Activated CD4-positive, alpha-beta T cell treated with anti-CD3 and anti-CD28 coated beads, Interleukin-2, amount 10 ng/mL, durations not matched to agents 24 days and 14 days (primary cell): ENCODE measurements at regions of chr16 and their contacts with region 1.

Region 1: DNA sequence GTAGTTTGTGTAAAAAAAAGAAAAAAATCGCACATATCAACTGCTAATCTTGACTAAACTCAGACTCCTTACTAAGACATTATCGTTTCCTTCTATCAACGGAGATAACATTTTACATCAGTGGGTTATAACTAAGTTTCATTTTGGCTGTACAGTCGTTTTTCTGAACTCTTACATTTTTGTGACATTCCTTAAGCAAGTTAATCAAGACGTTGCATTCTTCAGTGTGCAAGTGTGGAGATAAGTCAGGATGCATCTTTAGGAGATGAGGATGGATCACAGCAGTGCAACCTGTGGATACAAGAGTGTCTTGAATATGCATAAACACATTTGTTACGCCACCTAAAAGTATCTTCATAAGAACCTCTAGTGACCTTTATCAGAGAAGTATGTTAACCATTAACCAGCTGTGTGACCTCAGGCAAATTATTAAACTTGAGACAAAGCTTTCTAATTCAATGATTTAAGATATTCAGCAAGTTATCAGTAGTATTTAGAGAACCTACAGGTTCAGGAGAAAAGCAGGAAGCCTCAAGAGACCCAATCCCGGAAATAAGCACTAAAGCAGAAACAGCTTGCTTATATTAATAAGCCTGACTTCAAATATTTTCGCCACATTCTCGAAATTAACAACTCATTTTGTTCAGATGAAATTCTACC is 9.4 kb downstream of the CMC2 start:
- DNase-seq: peak; percentile 67
- H3K4me3 Mint-ChIP-seq: peak overlapping the region; percentile 88
- H3K27ac Mint-ChIP-seq: peak overlapping the region; percentile 89
- H3K4me1 Mint-ChIP-seq: peaks cover 48% of the 10 kb centered on the region
- H3K27me3 Mint-ChIP-seq: no peaks in the 10 kb centered on the region

Region 2: GRCh38 chr16:80899809-80900592 is 97.3 kb before region 1 on chr16:
- intact Hi-C with region 1: no loop called
- DNase-seq: no peak
- H3K4me3 Mint-ChIP-seq: no peak overlapping the region
- H3K27ac Mint-ChIP-seq: no peak overlapping the region
- H3K4me1 Mint-ChIP-seq: no peaks in the 10 kb centered on the region
- H3K27me3 Mint-ChIP-seq: peaks cover 2% of the 10 kb centered on the region

Region 3: GRCh38 chr16:80948886-80949493 is 48.3 kb before region 1 on chr16:
- intact Hi-C with region 1: loop called (anchors 10 kb)
- DNase-seq: peak; percentile 78
- H3K4me3 Mint-ChIP-seq: no peak overlapping the region
- H3K27ac Mint-ChIP-seq: no peak overlapping the region
- H3K4me1 Mint-ChIP-seq: peaks cover 13% of the 10 kb centered on the region
- H3K27me3 Mint-ChIP-seq: peaks cover 2% of the 10 kb centered on the region